ENCODE measurements at regions of chr11 and their contacts with region 1.

Region 1: DNA sequence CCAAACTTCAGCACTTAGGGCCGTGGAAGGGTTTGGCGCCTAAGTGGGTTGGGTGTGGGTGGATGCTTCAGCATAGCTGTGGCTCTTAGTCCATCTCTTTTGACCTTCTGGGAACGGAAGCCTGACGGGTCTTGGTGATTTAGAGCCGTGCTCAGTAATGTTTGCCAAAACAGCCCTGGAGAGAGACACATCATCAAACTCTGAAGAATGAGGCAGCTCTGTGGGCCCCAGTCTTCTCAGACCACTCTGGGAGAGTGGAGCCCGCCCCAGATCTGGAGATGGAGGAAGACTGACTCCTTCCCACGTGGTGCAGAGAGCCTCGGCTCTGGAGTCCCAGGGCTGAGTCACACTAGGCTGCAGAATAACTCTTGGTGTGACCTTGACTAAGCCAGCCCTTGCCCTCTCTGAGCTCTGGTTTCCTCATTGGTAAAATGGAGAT is 168.9 kb downstream of the C11orf91 start:
- DNase-seq: no peak
- CTCF ChIP-seq: no peak

Region 2: DNA sequence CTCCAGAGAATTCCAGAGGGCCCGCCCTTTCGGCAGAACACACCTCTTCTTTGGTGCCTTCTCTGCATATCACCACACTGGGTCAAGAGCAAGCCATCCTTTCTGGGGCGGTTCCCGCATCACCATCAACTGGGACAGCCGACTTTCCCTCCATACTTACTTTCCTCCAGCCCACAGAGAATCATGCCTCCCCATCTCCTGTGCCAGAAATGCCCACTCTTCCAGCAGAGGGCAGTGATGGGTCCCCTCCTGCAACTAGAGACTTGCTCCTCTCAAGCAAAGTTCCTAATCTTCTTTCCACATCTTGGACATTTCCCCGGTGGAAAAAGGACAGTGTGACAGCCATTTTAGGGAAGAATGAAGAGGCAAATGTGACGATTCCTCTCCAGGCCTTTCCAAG is 11.2 kb after region 1 on chr11:
- CTCF ChIA-PET with region 1: interaction called, 13 read pairs
- POLR2A ChIA-PET with region 1: no interaction called
- DNase-seq: peak; percentile 64
- CTCF ChIP-seq: peak; percentile 58